Activated CD8-positive, alpha-beta T cell treated with anti-CD3 and anti-CD28 coated beads for 36 hours (primary cell): ENCODE measurements at regions of chr2 and their contacts with region 1.

Region 1: DNA sequence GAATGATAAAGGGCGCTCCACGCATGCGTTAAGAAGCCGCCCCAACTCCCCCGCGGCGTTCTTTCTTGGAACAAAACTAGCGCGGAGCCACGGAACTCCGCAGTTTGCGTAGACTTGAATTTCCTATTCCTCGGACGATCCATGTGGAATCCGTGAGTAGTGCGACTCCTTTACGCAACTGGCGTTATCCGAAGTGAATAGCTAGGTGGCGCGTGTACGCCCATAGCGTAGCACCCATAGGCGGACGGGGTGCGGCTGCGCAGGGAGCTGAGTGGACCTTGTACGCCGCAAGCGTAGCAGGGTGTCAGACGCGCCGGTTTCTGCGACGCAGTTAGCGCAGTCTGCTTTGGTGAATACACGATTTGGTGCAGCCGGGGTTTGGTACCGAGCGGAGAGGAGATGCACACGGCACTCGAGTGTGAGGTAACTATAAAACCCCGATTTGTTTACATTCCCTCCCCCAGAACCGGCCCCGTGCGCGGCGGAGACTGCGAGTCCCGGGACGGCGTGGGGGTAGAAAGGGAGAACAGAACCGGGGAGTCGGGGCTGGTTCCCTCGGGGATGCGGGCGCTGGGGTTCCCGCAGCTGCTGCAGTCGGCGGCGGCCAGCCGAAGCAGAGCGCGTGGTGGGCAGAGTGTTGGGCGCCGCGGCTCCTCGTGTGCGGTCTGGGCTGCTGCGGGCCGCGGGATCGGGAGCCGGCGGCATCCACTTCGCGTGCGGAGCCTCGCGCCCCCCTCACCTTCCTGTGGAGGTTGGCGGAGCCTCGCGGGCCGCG is at the start of gene SLC39A10:
- DNase-seq: peak; percentile 98
- ATAC-seq: peak; percentile 89
- H3K4me3 Mint-ChIP-seq: peak within 1 kb of the TSS; percentile 95
- H3K27ac Mint-ChIP-seq: peak within 1 kb of the TSS; percentile 100
- H3K4me1 Mint-ChIP-seq: peaks cover 20% of the 10 kb centered on the region
- H3K27me3 Mint-ChIP-seq: no peaks in the 10 kb centered on the region
- CTCF ChIP-seq: no peak
- total RNA-seq, gene SLC39A10: 25.6 to 25.8 TPM

Region 2: GRCh38 chr2:195318440-195319111 is 338.5 kb before region 1 on chr2:
- CTCF ChIA-PET with region 1: interaction called, 6 read pairs
- POLR2A ChIA-PET with region 1: no interaction called
- intact Hi-C with region 1: loop called (anchors 10 kb)
- DNase-seq: peak; percentile 63
- ATAC-seq: peak; percentile 34
- H3K4me3 Mint-ChIP-seq: no peak overlapping the region
- H3K27ac Mint-ChIP-seq: no peak overlapping the region
- H3K4me1 Mint-ChIP-seq: peaks cover 2% of the 10 kb centered on the region
- H3K27me3 Mint-ChIP-seq: no peaks in the 10 kb centered on the region
- CTCF ChIP-seq: peak; percentile 79

Region 3: GRCh38 chr2:195498176-195498575 is 158.9 kb before region 1 on chr2:
- CTCF ChIA-PET with region 1: interaction called, 32 read pairs
- POLR2A ChIA-PET with region 1: interaction called, 5 read pairs
- intact Hi-C with region 1: no loop called
- DNase-seq: peak; percentile 76
- ATAC-seq: peak; percentile 58
- H3K4me3 Mint-ChIP-seq: no peak overlapping the region
- H3K27ac Mint-ChIP-seq: peak overlapping the region; percentile 2
- H3K4me1 Mint-ChIP-seq: peaks cover 27% of the 10 kb centered on the region
- H3K27me3 Mint-ChIP-seq: no peaks in the 10 kb centered on the region
- CTCF ChIP-seq: peak; percentile 51

Region 4: DNA sequence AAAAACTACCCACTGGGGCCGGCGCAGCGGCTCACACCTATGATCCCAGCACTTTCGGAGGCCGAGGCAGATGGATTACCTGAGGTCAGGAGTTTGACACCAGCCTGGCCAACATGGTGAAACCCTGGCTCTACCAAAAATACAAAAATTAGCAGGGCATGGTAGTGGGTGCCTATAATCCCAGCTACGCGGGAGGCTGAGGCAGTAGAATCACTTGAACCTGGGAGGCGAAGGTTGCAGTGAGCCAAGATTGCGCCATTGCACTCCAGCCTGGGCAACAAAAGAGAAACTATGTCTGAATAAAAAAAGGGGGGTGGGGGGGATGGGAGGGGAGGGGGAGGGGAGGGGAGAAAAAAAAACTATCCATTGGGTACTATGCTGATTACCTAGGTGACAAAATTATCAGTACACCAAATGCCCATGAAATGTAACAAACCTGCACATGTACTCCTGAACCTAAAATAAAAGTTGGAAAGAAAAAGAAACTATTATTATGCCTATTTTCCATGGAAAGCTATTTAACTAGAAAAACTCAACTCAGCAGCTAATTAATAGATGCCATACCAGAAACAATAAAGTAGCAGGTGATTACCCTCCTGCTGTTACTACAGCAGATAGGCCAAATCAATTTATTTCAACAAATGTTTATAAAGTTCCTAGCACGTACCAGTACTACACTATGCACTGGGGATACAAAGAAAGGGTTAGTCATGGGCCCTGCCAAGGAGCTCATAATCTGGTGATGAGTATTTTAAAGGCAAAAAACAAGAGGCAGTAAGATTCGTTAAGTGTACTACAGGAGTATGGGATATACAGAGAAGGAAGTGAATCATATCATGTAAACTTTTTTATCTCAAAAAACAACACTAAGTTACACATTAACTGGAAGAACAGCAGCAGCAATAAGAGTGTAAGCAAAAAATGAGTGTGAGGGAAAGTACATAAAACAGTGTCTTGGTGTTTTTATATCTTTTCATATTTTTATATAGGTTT is 112.8 kb before region 1 on chr2:
- CTCF ChIA-PET with region 1: interaction called, 3 read pairs
- POLR2A ChIA-PET with region 1: interaction called, 12 read pairs
- intact Hi-C with region 1: no loop called
- DNase-seq: no peak
- ATAC-seq: peak; percentile 91
- H3K4me3 Mint-ChIP-seq: no peak overlapping the region
- H3K27ac Mint-ChIP-seq: peak overlapping the region; percentile 87
- H3K4me1 Mint-ChIP-seq: peaks cover 33% of the 10 kb centered on the region
- H3K27me3 Mint-ChIP-seq: no peaks in the 10 kb centered on the region
- CTCF ChIP-seq: no peak

Region 5: DNA sequence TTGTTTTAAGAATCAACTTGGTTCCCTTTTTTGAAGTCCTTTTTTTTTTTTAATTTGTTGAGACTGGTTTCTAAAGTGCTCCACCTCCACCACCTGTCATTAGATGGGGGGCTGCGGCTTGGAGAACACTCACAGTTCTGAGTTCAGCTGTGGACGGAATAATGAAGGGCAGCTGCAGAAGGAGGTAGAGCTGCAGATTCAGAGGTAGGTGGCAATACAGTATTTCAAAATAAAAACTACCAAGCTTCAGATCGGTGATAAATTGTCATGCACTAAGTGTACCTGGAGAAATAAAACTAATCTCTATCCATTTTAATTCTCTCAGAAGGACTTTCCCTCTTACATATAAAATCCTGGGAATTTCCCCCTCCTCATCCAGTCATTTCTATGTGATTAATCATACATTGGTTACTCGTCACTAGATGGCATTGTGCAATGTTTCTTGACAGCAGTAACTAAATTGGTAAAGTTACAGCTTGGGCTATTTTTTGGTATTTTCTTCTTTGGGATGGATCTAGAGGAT is 81.1 kb before region 1 on chr2:
- CTCF ChIA-PET with region 1: interaction called, 28 read pairs
- POLR2A ChIA-PET with region 1: interaction called, 6 read pairs
- intact Hi-C with region 1: loop called (anchors 1 kb)
- DNase-seq: peak; percentile 48
- ATAC-seq: peak; percentile 72
- H3K4me3 Mint-ChIP-seq: no peak overlapping the region
- H3K27ac Mint-ChIP-seq: peak overlapping the region; percentile 47
- H3K4me1 Mint-ChIP-seq: peaks cover 53% of the 10 kb centered on the region
- H3K27me3 Mint-ChIP-seq: no peaks in the 10 kb centered on the region
- CTCF ChIP-seq: peak; percentile 36

Region 6: GRCh38 chr2:195741191-195741590 is 84.1 kb after region 1 on chr2:
- CTCF ChIA-PET with region 1: no interaction called
- POLR2A ChIA-PET with region 1: no interaction called
- intact Hi-C with region 1: no loop called
- DNase-seq: no peak
- ATAC-seq: no peak
- H3K4me3 Mint-ChIP-seq: no peak overlapping the region
- H3K27ac Mint-ChIP-seq: no peak overlapping the region
- H3K4me1 Mint-ChIP-seq: no peaks in the 10 kb centered on the region
- H3K27me3 Mint-ChIP-seq: no peaks in the 10 kb centered on the region
- CTCF ChIP-seq: no peak

Region 7: DNA sequence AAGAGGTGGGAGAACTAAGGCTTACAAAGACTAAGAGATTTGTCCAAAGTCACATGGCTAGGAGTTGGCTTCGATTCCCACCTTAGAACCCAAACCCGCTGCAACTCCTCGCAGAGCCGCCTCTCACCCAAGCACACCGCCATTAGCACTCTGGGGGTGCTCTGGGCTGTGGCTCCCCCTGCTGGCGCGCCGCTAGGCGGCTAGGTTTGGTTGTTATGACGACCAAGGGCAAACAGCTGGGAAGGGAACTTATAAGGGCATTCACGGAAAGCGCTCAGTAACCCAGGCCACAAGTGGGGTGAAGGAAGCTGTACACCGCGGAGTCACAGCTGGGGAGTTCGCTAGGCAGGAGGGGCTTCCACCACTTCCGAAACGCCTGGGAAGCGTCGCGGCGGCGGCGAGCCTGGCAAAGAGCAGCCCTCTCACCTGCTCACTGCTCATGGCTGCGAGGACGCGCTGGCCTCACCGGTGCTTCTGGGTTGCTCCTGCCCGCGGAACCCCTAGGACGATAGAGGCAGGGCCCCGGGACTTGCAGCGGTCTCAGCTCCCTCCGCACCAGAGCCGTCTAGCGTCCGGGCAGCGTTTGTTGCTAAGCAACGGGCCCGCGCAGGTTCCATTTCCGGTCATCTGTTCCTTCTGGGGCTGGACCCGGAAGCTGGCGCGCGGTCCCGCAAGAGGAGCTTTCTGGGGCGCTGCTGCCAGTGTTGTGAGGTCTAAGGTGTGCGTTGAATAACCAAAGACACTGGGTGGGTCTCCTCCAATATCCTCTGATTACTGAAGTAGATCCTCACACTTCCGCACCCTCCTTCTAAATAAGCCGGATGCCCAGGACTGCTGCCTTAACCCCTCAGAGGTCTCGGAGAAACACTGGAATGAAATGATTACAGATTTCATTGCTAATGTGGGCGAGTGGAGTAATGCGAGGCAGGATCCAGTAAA is 411.5 kb after region 1 on chr2 and contains the start of gene DNAH7:
- CTCF ChIA-PET with region 1: interaction called, 12 read pairs
- POLR2A ChIA-PET with region 1: interaction called, 4 read pairs
- intact Hi-C with region 1: loop called (anchors 5 kb)
- DNase-seq: peak; percentile 94
- ATAC-seq: peak; percentile 96
- H3K4me3 Mint-ChIP-seq: peak within 1 kb of the TSS; percentile 78
- H3K27ac Mint-ChIP-seq: peak within 1 kb of the TSS; percentile 62
- H3K4me1 Mint-ChIP-seq: peaks cover 15% of the 10 kb centered on the region
- H3K27me3 Mint-ChIP-seq: peaks cover 3% of the 10 kb centered on the region
- CTCF ChIP-seq: peak; percentile 62
- total RNA-seq, gene DNAH7: 0.07 TPM